ENCODE measurements at regions of chr6 and their contacts with region 1.

Region 1: GRCh38 chr6:123802697-123803496 is 768 bp upstream of the NKAIN2 start:
- DNase-seq: peak; percentile 89
- ATAC-seq: peak; percentile 89

Region 2: DNA sequence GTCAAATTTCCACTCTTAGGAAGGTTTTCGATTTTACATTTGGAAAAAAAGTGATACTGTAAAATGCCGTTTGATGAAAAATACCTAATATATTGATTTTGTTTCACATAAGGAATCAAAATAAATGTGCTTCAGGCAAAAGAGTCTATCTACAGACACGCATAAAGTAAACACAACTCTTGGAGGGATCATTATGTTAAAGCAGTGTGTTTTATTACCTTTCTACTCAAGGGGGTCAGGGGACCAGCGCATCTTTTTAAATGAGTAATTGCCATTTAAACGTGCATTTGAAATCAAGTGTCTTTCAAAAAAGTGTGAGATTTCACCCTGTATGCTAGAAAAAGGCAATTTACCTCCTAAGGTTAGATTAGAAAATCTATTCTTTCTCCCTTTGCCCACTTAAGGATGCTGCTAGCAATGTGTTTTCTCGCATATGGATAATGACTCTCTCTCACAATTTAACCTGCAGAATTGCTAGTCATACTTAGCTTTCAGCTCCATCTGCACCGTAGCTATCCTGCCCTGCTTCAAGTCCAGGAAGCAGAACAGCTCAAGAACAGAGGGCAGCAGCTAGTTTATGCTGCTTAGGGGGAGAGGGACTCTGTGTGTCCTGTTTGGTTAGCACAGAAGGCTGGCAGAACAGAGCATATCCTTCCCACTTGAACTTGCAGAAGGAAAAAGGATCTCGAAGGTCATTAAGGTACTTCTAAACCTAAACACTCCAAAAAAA is 35.8 kb after region 1 on chr6:
- intact Hi-C with region 1: no loop called
- DNase-seq: no peak
- ATAC-seq: no peak

Region 3: GRCh38 chr6:123967905-123968304 is 165.0 kb after region 1 on chr6:
- intact Hi-C with region 1: loop called (anchors 2 kb)
- DNase-seq: no peak
- ATAC-seq: no peak

Region 4: GRCh38 chr6:124054034-124054433 is 251.1 kb after region 1 on chr6:
- intact Hi-C with region 1: loop called (anchors 5 kb)
- DNase-seq: no peak
- ATAC-seq: no peak

Region 5: DNA sequence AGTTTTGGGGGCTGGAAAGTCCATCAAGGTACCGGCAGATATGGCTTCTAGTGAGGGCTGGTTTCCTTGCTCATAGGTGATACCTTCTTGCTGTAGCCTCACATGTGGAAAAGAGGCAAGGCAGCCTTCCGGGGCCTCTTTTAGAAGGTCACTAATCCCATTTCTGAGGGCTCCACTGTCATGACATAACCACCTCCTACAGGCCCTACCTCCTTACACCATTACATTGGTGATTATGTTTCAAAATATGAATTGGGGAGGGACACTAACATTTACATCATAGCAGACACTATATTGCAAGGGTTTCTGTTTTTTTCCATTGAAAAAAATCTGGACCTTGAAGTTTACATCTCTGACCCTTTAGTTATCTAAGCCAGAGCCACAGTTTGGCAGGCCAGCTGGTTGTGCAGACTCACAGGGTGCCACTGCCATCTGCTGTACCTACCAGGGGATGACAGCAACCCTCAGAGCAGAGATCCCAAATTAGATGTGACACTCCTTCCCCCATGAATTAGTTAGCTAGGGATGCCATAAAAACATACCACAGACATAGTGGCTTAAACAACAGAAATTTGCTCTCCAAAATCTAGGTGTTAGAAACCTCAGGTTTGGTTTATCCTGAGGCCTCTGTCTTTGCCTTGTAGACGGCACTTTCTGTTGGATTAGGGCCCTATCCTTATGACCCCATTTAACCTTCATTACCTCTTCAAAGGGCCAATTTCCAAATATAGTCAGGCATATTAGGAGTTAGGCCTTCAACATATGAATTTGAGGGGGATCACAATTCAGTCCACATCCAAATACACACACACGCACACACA is 993.0 kb after region 1 on chr6:
- intact Hi-C with region 1: loop called (anchors 2 kb)
- DNase-seq: no peak
- ATAC-seq: peak; percentile 84

Region 6: DNA sequence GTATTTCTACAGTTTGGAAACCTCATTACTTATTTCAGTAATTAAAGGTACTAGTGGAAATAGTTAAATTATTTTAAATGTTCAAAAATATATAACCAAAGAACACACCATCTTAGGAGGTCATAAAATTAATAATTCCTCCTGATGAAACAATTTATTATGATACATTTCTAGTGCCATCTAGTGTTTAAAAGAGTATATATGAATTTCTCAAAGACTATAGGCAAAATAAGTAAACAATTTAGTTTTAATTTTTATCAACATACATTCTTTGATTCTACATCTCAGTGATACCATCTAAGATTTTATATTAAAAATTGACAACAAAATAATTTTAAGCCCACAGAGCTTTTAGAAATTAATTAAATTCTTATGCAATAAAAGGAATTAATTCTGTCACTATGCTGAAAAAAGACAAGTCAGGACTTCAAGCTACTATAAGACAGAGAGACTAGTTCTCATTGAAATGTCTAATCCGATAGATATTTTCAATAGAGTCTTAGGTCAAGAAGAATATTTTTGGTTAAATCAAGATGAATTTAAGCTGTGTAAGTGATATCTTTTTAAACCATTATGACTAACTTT is 1051.5 kb after region 1 on chr6:
- intact Hi-C with region 1: loop called (anchors 5 kb)
- DNase-seq: no peak
- ATAC-seq: no peak

Measured in Right ventricle myocardium inferior (tissue), 1 donor.